IMR-90 (cell line): ENCODE measurements at regions of chr5 and their contacts with region 1.

Region 1: GRCh38 chr5:95846554-95847260 is 24.2 kb upstream of the GLRX start:
- DNase-seq: peak; percentile 79
- ATAC-seq: peak; percentile 92
- H3K4me3 ChIP-seq: no peak overlapping the region
- H3K27ac ChIP-seq: no peak overlapping the region
- H3K4me1 ChIP-seq: peaks cover 16% of the 10 kb centered on the region
- H3K27me3 ChIP-seq: no peaks in the 10 kb centered on the region
- CTCF ChIP-seq: peak; percentile 96
- POLR2A ChIP-seq: peak; percentile 50
- RAD21 ChIP-seq: peak; percentile 93

Region 2: DNA sequence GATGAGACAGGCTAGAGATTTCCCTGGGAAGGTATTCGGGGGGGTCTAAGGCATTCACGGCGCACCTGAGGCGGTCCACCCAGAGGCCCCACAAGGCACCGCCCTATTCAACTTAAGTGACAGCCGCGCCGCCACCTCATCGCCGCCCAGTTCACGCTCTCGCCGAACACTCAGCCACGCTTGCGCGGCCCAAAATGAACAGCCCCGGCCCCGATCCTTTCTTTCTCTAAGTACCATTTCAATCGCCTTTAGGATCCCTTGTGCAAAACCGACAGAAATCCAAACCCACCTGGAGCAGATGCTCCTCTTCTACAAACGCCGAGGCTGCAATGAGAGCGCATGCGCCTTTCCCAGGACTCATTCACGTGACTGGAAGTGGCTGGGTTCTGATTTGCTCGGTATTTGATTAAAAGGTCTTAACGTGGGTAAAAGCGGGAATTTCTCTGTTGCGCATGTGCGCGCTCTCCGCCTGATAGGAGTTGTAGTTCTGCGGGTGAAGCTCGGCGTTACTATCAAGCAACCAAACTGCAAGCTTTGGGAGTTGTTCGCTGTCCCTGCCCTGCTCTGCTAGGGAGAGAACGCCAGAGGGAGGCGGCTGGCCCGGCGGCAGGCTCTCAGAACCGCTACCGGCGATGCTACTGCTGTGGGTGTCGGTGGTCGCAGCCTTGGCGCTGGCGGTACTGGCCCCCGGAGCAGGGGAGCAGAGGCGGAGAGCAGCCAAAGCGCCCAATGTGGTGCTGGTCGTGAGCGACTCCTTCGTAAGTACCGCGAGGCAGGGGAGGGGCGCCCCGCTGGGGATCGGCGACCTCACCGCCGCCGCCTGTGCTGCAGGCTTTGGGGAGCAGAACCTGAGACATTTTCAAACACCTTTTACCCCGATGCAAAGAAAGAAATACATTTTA is 291.8 kb before region 1 on chr5 and contains the starts of genes ARSK and SKIC3:
- CTCF ChIA-PET with region 1: no interaction called
- POLR2A ChIA-PET with region 1: no interaction called
- dilution Hi-C with region 1: no loop called
- in situ Hi-C with region 1: loop called (anchors 10 kb)
- intact Hi-C with region 1: loop called (anchors 5 kb)
- DNase-seq: peak; percentile 99
- ATAC-seq: peak; percentile 93
- H3K4me3 ChIP-seq: peak within 1 kb of the TSS; percentile 52
- H3K27ac ChIP-seq: peak within 1 kb of the TSS; percentile 75
- H3K4me1 ChIP-seq: peaks cover 6% of the 10 kb centered on the region
- H3K27me3 ChIP-seq: no peaks in the 10 kb centered on the region
- CTCF ChIP-seq: peak; percentile 40
- POLR2A ChIP-seq: peak; percentile 67
- RAD21 ChIP-seq: peak; percentile 44
- total RNA-seq, gene ARSK: 22.0 and 25.0 TPM in 2 replicates
- total RNA-seq, gene SKIC3: 145 and 184 TPM in 2 replicates

Region 3: GRCh38 chr5:95646554-95647431 is 199.9 kb before region 1 on chr5 and contains the start of gene RFESD:
- CTCF ChIA-PET with region 1: interaction called, 5 read pairs
- POLR2A ChIA-PET with region 1: no interaction called
- dilution Hi-C with region 1: no loop called
- in situ Hi-C with region 1: no loop called
- intact Hi-C with region 1: loop called (anchors 1 kb)
- DNase-seq: peak; percentile 93
- ATAC-seq: peak; percentile 96
- H3K4me3 ChIP-seq: peak within 1 kb of the TSS; percentile 55
- H3K27ac ChIP-seq: peak within 1 kb of the TSS; percentile 59
- H3K4me1 ChIP-seq: peaks cover 4% of the 10 kb centered on the region
- H3K27me3 ChIP-seq: no peaks in the 10 kb centered on the region
- CTCF ChIP-seq: peak; percentile 10; the same call in 1 of the 2 replicates
- POLR2A ChIP-seq: peak; percentile 83; the same call in 1 of the 2 replicates
- RAD21 ChIP-seq: no peak
- total RNA-seq, gene RFESD: 2.7 and 3.6 TPM in 2 replicates

Region 4: GRCh38 chr5:95664204-95664786 is 182.4 kb before region 1 on chr5:
- CTCF ChIA-PET with region 1: interaction called, 4 read pairs
- POLR2A ChIA-PET with region 1: no interaction called
- dilution Hi-C with region 1: no loop called
- in situ Hi-C with region 1: loop called (anchors 10 kb)
- intact Hi-C with region 1: loop called (anchors 2 kb)
- DNase-seq: peak; percentile 49
- ATAC-seq: peak; percentile 79
- H3K4me3 ChIP-seq: no peak overlapping the region
- H3K27ac ChIP-seq: peak overlapping the region; percentile 34; the same call in 1 of the 2 replicates
- H3K4me1 ChIP-seq: peaks cover 8% of the 10 kb centered on the region; the same call in 1 of the 2 replicates
- H3K27me3 ChIP-seq: no peaks in the 10 kb centered on the region
- CTCF ChIP-seq: peak; percentile 79
- POLR2A ChIP-seq: no peak
- RAD21 ChIP-seq: peak; percentile 73

Region 5: GRCh38 chr5:95741458-95741857 is 105.2 kb before region 1 on chr5:
- CTCF ChIA-PET with region 1: no interaction called
- POLR2A ChIA-PET with region 1: interaction called, 18 read pairs
- dilution Hi-C with region 1: no loop called
- in situ Hi-C with region 1: no loop called
- intact Hi-C with region 1: no loop called
- DNase-seq: no peak
- ATAC-seq: no peak
- H3K4me3 ChIP-seq: no peak overlapping the region
- H3K27ac ChIP-seq: no peak overlapping the region
- H3K4me1 ChIP-seq: peaks cover 5% of the 10 kb centered on the region
- H3K27me3 ChIP-seq: no peaks in the 10 kb centered on the region
- CTCF ChIP-seq: no peak
- POLR2A ChIP-seq: no peak
- RAD21 ChIP-seq: no peak

Region 6: GRCh38 chr5:95781101-95781583 is 65.6 kb before region 1 on chr5:
- CTCF ChIA-PET with region 1: interaction called, 12 read pairs
- POLR2A ChIA-PET with region 1: interaction called, 3 read pairs
- dilution Hi-C with region 1: no loop called
- in situ Hi-C with region 1: no loop called
- intact Hi-C with region 1: loop called (anchors 1 kb)
- DNase-seq: peak; percentile 85
- ATAC-seq: peak; percentile 75
- H3K4me3 ChIP-seq: no peak overlapping the region
- H3K27ac ChIP-seq: no peak overlapping the region; the same call in 1 of the 2 replicates
- H3K4me1 ChIP-seq: peaks cover 22% of the 10 kb centered on the region
- H3K27me3 ChIP-seq: no peaks in the 10 kb centered on the region
- CTCF ChIP-seq: peak; percentile 82
- POLR2A ChIP-seq: no peak; the same call in 1 of the 2 replicates
- RAD21 ChIP-seq: peak; percentile 83

Region 7: DNA sequence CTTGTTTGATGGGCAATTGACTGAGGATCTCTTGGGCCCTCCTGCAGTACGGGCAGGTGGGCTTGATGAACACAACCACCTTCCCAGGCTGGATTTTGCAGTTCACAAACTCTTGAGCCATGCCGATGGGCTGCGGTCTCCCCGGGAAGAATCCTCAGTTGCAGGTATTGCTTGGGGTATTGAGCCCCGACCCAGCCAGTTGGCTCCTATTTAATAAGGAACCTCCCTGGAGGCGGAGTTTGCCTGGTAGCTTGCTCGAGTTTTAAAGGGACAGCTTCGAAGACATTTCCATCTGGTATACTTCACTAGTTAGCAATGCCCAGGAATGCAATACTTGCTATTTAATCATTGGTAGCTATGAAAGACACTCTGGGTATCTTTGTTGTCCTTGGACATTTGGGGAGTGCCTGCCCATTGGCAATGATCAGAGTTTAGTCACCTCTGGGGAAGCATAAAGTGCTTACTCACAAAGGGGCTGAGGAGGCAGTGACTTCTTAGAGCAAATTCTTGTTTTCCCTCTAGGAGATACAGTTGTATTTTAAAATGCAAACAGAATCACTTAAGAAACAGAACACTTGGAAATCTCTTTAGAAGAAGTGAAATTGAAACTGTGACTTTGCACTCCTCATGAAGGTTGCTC is 24.0 kb before region 1 on chr5 and contains the start of gene GLRX:
- CTCF ChIA-PET with region 1: interaction called, 3 read pairs
- POLR2A ChIA-PET with region 1: interaction called, 15 read pairs
- dilution Hi-C with region 1: no loop called
- in situ Hi-C with region 1: no loop called
- intact Hi-C with region 1: no loop called
- DNase-seq: peak; percentile 89
- ATAC-seq: peak; percentile 70
- H3K4me3 ChIP-seq: peak within 1 kb of the TSS; percentile 92
- H3K27ac ChIP-seq: peak within 1 kb of the TSS; percentile 96
- H3K4me1 ChIP-seq: peaks cover 25% of the 10 kb centered on the region
- H3K27me3 ChIP-seq: no peaks in the 10 kb centered on the region
- CTCF ChIP-seq: no peak
- POLR2A ChIP-seq: peak; percentile 80
- RAD21 ChIP-seq: no peak
- total RNA-seq, gene GLRX: 142 and 145 TPM in 2 replicates

Region 8: GRCh38 chr5:95870105-95870672 is 23.5 kb after region 1 on chr5:
- CTCF ChIA-PET with region 1: no interaction called
- POLR2A ChIA-PET with region 1: no interaction called
- dilution Hi-C with region 1: no loop called
- in situ Hi-C with region 1: no loop called
- intact Hi-C with region 1: no loop called
- DNase-seq: peak; percentile 87
- ATAC-seq: peak; percentile 38
- H3K4me3 ChIP-seq: no peak overlapping the region
- H3K27ac ChIP-seq: peak overlapping the region; percentile 87
- H3K4me1 ChIP-seq: peaks cover 11% of the 10 kb centered on the region
- H3K27me3 ChIP-seq: no peaks in the 10 kb centered on the region
- CTCF ChIP-seq: no peak
- POLR2A ChIP-seq: no peak
- RAD21 ChIP-seq: no peak

Region 9: GRCh38 chr5:96275051-96275450 is 428.3 kb after region 1 on chr5:
- CTCF ChIA-PET with region 1: no interaction called
- POLR2A ChIA-PET with region 1: no interaction called
- dilution Hi-C with region 1: no loop called
- in situ Hi-C with region 1: no loop called
- intact Hi-C with region 1: no loop called
- DNase-seq: no peak
- ATAC-seq: no peak
- H3K4me3 ChIP-seq: no peak overlapping the region
- H3K27ac ChIP-seq: no peak overlapping the region
- H3K4me1 ChIP-seq: no peaks in the 10 kb centered on the region
- H3K27me3 ChIP-seq: no peaks in the 10 kb centered on the region
- CTCF ChIP-seq: no peak
- POLR2A ChIP-seq: no peak
- RAD21 ChIP-seq: no peak